Activated CD4-positive, alpha-beta T cell treated with anti-CD3 and anti-CD28 coated beads, Interleukin-2, amount 10 ng/mL, durations not matched to agents 24 days and 14 days (primary cell): ENCODE measurements at regions of chrX and their contacts with region 1.

Region 1: GRCh38 chrX:34300871-34301270 is 168.8 kb upstream of the FAM47A start:
- DNase-seq: peak; percentile 57
- H3K4me3 Mint-ChIP-seq: no peak overlapping the region
- H3K27ac Mint-ChIP-seq: no peak overlapping the region
- H3K4me1 Mint-ChIP-seq: no peaks in the 10 kb centered on the region
- H3K27me3 Mint-ChIP-seq: no peaks in the 10 kb centered on the region

Region 2: GRCh38 chrX:33434256-33435092 is 866.4 kb before region 1 on chrX:
- intact Hi-C with region 1: loop called (anchors 5 kb)
- DNase-seq: peak; percentile 72
- H3K4me3 Mint-ChIP-seq: no peak overlapping the region
- H3K27ac Mint-ChIP-seq: no peak overlapping the region
- H3K4me1 Mint-ChIP-seq: no peaks in the 10 kb centered on the region
- H3K27me3 Mint-ChIP-seq: no peaks in the 10 kb centered on the region

Region 3: GRCh38 chrX:34365482-34365881 is 64.6 kb after region 1 on chrX:
- intact Hi-C with region 1: no loop called
- DNase-seq: no peak
- H3K4me3 Mint-ChIP-seq: no peak overlapping the region
- H3K27ac Mint-ChIP-seq: no peak overlapping the region
- H3K4me1 Mint-ChIP-seq: no peaks in the 10 kb centered on the region
- H3K27me3 Mint-ChIP-seq: no peaks in the 10 kb centered on the region